ENCODE measurements at regions of chr7 and their contacts with region 1.

Region 1: GRCh38 chr7:71733107-71733870 is 601.3 kb downstream of the GALNT17 start:
- DNase-seq: peak; percentile 86
- H3K4me3 ChIP-seq: peak overlapping the region in 3 of 4 donors; percentile 16 to 33 (median 17)
- H3K27ac ChIP-seq: no peak overlapping the region
- H3K4me1 ChIP-seq: peaks cover 0 to 6% (median 5%) of the 10 kb centered on the region in 4 donors
- H3K27me3 ChIP-seq: no peaks in the 10 kb centered on the region
- CTCF ChIP-seq: peak; percentile 68 to 90 (median 85)
- EP300 ChIP-seq: no peak
- POLR2A ChIP-seq: no peak

Region 2: GRCh38 chr7:70829221-70830059 is 903.8 kb before region 1 on chr7:
- intact Hi-C with region 1: loop called (anchors 1 kb)
- DNase-seq: peak; percentile 73
- H3K4me3 ChIP-seq: peak overlapping the region in 2 of 4 donors; percentile 20 to 22
- H3K27ac ChIP-seq: no peak overlapping the region
- H3K4me1 ChIP-seq: peaks cover 0 to 8% (median 7%) of the 10 kb centered on the region in 4 donors
- H3K27me3 ChIP-seq: peaks cover 0 to 12% (median 7%) of the 10 kb centered on the region in 3 donors
- CTCF ChIP-seq: peak; percentile 49 to 90 (median 76)
- EP300 ChIP-seq: no peak
- POLR2A ChIP-seq: no peak

Region 3: GRCh38 chr7:70856866-70857630 is 876.2 kb before region 1 on chr7:
- intact Hi-C with region 1: loop called (anchors 1 kb)
- DNase-seq: peak; percentile 71
- H3K4me3 ChIP-seq: no peak overlapping the region
- H3K27ac ChIP-seq: no peak overlapping the region
- H3K4me1 ChIP-seq: no peaks in the 10 kb centered on the region
- H3K27me3 ChIP-seq: no peaks in the 10 kb centered on the region
- CTCF ChIP-seq: peak; percentile 50 to 92 (median 76)
- EP300 ChIP-seq: no peak
- POLR2A ChIP-seq: no peak

Region 4: GRCh38 chr7:71131256-71132126 is 601.8 kb before region 1 on chr7:
- intact Hi-C with region 1: loop called (anchors 2 kb)
- DNase-seq: peak; percentile 77
- H3K4me3 ChIP-seq: peak overlapping the region; percentile 52 to 86 (median 78)
- H3K27ac ChIP-seq: peak overlapping the region; percentile 77 to 90 (median 80)
- H3K4me1 ChIP-seq: peaks cover 0 to 44% (median 16%) of the 10 kb centered on the region in 4 donors
- H3K27me3 ChIP-seq: no peaks in the 10 kb centered on the region
- CTCF ChIP-seq: no peak
- EP300 ChIP-seq: no peak
- POLR2A ChIP-seq: no peak

Region 5: GRCh38 chr7:71237945-71238344 is 495.3 kb before region 1 on chr7:
- intact Hi-C with region 1: loop called (anchors 10 kb)
- DNase-seq: peak; percentile 79
- H3K4me3 ChIP-seq: no peak overlapping the region
- H3K27ac ChIP-seq: peak overlapping the region; percentile 67 to 90 (median 82)
- H3K4me1 ChIP-seq: peaks cover 0 to 49% (median 46%) of the 10 kb centered on the region in 4 donors
- H3K27me3 ChIP-seq: no peaks in the 10 kb centered on the region
- CTCF ChIP-seq: peak in 3 of 4 experiments; percentile 14 to 49 (median 34)
- EP300 ChIP-seq: no peak
- POLR2A ChIP-seq: no peak

Region 6: GRCh38 chr7:71543396-71543795 is 189.9 kb before region 1 on chr7:
- intact Hi-C with region 1: no loop called
- DNase-seq: no peak
- H3K4me3 ChIP-seq: no peak overlapping the region
- H3K27ac ChIP-seq: no peak overlapping the region
- H3K4me1 ChIP-seq: peaks cover 0 to 6% (median 0%) of the 10 kb centered on the region in 4 donors
- H3K27me3 ChIP-seq: no peaks in the 10 kb centered on the region
- CTCF ChIP-seq: no peak
- EP300 ChIP-seq: no peak
- POLR2A ChIP-seq: no peak

Region 7: GRCh38 chr7:71752171-71752935 is 19.1 kb after region 1 on chr7:
- intact Hi-C with region 1: no loop called
- DNase-seq: no peak
- H3K4me3 ChIP-seq: no peak overlapping the region
- H3K27ac ChIP-seq: no peak overlapping the region
- H3K4me1 ChIP-seq: peaks cover 0 to 9% (median 6%) of the 10 kb centered on the region in 4 donors
- H3K27me3 ChIP-seq: peaks cover 4 to 40% (median 16%) of the 10 kb centered on the region in 3 donors
- CTCF ChIP-seq: peak in 3 of 4 experiments; percentile 14 to 40 (median 17)
- EP300 ChIP-seq: no peak
- POLR2A ChIP-seq: no peak

Region 8: DNA sequence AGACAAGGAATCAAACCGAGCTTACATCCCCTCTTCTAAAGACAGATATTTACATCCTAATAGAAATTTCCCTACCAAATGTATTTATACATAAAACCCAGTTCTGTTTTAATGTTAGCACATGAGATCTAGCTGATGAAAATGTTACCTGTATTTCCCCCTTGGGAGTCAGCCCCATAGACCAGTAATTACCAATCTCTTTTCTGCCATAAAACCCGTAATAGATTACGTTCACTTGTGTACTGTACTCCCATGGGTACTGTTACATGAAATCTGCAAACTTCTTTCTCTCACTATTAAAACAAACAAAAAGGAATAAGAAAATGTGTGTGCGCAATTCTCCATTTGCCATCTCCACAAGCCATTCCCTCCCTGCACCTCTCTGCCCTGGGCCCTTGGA is 228.0 kb after region 1 on chr7:
- intact Hi-C with region 1: no loop called
- DNase-seq: no peak
- H3K4me3 ChIP-seq: no peak overlapping the region
- H3K27ac ChIP-seq: no peak overlapping the region
- H3K4me1 ChIP-seq: no peaks in the 10 kb centered on the region
- H3K27me3 ChIP-seq: no peaks in the 10 kb centered on the region
- CTCF ChIP-seq: no peak
- EP300 ChIP-seq: no peak
- POLR2A ChIP-seq: no peak

Region 9: GRCh38 chr7:72170475-72170874 is 437.2 kb after region 1 on chr7:
- intact Hi-C with region 1: no loop called
- DNase-seq: no peak
- H3K4me3 ChIP-seq: no peak overlapping the region
- H3K27ac ChIP-seq: no peak overlapping the region
- H3K4me1 ChIP-seq: no peaks in the 10 kb centered on the region
- H3K27me3 ChIP-seq: no peaks in the 10 kb centered on the region
- CTCF ChIP-seq: no peak
- EP300 ChIP-seq: no peak
- POLR2A ChIP-seq: no peak

Measured in sigmoid colon (tissue), 7 donors.